HCT116 (cell line): ENCODE measurements at regions of chr18 and their contacts with region 1.

Region 1: GRCh38 chr18:596288-596881 is 403 bp upstream of the CLUL1 start:
- DNase-seq: peak; percentile 47
- ATAC-seq: peak; percentile 85
- H3K4me3 ChIP-seq: peak overlapping the region; percentile 18 to 41
- H3K27ac ChIP-seq: no peak overlapping the region
- H3K4me1 ChIP-seq: peaks cover 0 to 15% of the 10 kb centered on the region in 2 experiments; a peak in 2 of 4 replicates
- H3K27me3 ChIP-seq: no peaks in the 10 kb centered on the region
- CTCF ChIP-seq: no peak
- POLR2A ChIP-seq: no peak
- RAD21 ChIP-seq: no peak

Region 2: DNA sequence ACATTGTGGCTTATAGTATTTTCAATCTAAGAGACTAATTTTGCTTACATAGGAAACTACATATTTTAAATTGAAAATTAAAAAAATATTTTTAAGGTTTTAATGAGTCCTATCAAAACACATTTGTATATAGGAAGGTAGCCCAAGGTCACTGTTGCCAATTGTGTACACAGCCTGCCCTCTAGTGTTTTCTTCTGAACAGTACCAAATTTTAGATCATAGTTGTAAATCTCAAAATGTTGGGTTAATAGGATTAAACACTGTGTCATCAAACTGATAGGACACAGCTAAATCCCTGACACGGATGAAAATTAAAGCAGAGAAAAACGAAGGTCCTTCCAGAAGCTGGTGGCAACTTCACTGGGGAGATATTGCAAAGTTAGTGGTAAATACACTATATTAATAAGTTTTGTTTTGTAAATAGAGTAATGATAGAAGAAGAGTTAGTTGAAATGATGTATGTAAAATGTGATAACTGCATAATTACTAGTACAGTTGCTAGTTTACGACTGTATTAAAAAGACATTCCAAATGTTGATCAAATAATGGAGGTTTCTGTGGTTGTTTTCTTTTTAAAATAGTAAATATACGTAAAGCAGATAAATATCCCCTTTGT is 20.1 kb after region 1 on chr18:
- CTCF ChIA-PET with region 1: no interaction called
- POLR2A ChIA-PET with region 1: no interaction called
- RAD21 ChIA-PET with region 1: no interaction called
- intact Hi-C with region 1: loop called (anchors 1 kb)
- DNase-seq: peak; percentile 35
- ATAC-seq: peak; percentile 78
- H3K4me3 ChIP-seq: no peak overlapping the region
- H3K27ac ChIP-seq: no peak overlapping the region
- H3K4me1 ChIP-seq: no peaks in the 10 kb centered on the region
- H3K27me3 ChIP-seq: no peaks in the 10 kb centered on the region
- CTCF ChIP-seq: peak; percentile 62 to 76 (median 69)
- POLR2A ChIP-seq: no peak
- RAD21 ChIP-seq: peak; percentile 85